Activated naive CD4-positive, alpha-beta T cell treated with anti-CD3 and anti-CD28 coated beads for 36 hours (primary cell): ENCODE measurements at regions of chr2 and their contacts with region 1.

Region 1: GRCh38 chr2:191144217-191144616 is 6.6 kb downstream of the STAT4 start:
- DNase-seq: no peak
- H3K4me3 Mint-ChIP-seq: no peak overlapping the region
- H3K27ac Mint-ChIP-seq: no peak overlapping the region
- H3K4me1 Mint-ChIP-seq: peaks cover 66% of the 10 kb centered on the region
- H3K27me3 Mint-ChIP-seq: no peaks in the 10 kb centered on the region

Region 2: GRCh38 chr2:191128172-191128910 is 15.9 kb before region 1 on chr2:
- CTCF ChIA-PET with region 1: no interaction called
- intact Hi-C with region 1: loop called (anchors 1 kb)
- DNase-seq: peak; percentile 27
- H3K4me3 Mint-ChIP-seq: peak overlapping the region; percentile 32
- H3K27ac Mint-ChIP-seq: peak overlapping the region; percentile 63
- H3K4me1 Mint-ChIP-seq: peaks cover 65% of the 10 kb centered on the region
- H3K27me3 Mint-ChIP-seq: no peaks in the 10 kb centered on the region